ENCODE measurements at regions of chr5 and their contacts with region 1.

Region 1: DNA sequence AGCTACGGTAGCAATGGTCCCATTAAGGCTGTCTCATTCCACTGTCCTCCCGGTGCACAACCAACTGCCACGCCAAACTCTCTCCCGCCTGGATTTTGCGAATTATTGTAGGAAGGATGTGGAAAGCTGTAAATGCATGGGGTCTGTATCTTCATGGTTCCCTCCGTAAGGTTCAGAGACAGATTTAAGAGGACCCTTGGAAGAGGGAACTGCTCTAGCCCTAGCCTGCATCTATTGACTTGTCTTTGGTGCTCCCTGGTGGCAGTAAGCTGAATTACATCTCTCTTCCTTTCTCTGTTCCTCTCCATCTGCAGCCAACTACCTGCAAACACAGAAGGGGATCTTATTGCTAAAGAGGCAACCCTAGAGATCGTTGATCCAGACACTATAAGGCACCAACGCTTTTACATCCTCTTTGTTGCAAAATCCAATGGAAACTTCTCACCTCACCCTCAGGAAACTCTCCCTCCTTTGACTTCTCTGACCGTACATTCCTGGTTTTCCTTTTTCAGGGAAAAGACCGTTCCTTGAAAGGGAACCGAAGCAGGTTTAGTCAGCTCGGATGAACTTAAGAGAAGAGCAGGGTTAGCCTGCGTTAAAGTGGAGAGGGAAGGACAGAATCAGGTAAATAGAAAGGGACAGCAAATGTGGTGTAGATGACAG is 11.9 kb downstream of the CAPSL start:
- DNase-seq: peak; percentile 65
- H3K4me3 Mint-ChIP-seq: peak overlapping the region; percentile 40
- H3K27ac Mint-ChIP-seq: no peak overlapping the region
- H3K4me1 Mint-ChIP-seq: peaks cover 41% of the 10 kb centered on the region
- H3K27me3 Mint-ChIP-seq: peaks cover 12% of the 10 kb centered on the region

Region 2: DNA sequence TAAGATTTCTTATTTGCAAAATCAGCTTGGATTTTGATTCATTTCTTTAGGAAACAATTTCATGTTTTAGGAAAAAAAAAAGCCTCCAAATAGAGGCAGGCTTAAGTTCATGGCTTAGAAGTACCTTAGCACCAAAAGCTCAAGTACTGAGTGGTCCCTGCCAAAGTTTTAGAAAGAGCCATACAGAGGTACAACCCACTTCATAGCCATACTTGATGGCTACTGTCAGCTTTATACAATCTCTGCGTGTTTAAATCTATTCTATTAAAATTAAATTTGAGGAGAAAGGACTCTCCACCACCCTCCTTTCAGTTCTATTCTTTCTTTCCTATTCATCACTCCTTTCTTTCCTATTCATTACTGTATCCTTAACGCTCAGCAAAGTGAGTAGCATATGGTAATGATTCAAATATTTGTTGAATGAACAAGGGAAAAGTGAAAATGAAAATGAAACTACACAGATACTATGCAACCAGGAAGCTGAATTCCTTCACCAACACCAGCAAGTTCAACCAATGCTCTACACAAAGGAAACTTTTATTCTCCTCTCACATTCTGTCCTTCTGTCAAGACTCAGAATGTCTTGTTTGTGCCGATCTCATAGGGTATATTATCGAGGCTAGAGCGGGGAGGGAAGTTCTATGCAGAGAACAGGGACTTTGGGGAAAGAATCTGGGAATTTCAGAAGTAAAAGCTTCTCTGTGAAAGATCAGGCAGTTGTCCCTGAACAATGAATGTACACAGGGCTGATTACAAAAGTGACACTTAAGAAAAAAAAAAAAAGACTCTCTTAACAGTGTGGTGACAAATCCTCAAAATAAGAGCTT is 447.5 kb before region 1 on chr5:
- CTCF ChIA-PET with region 1: no interaction called
- POLR2A ChIA-PET with region 1: interaction called, 3 read pairs
- intact Hi-C with region 1: loop called (anchors 5 kb)
- DNase-seq: no peak
- H3K4me3 Mint-ChIP-seq: peak overlapping the region; percentile 57
- H3K27ac Mint-ChIP-seq: peak overlapping the region; percentile 78
- H3K4me1 Mint-ChIP-seq: peaks cover 9% of the 10 kb centered on the region
- H3K27me3 Mint-ChIP-seq: no peaks in the 10 kb centered on the region

Region 3: DNA sequence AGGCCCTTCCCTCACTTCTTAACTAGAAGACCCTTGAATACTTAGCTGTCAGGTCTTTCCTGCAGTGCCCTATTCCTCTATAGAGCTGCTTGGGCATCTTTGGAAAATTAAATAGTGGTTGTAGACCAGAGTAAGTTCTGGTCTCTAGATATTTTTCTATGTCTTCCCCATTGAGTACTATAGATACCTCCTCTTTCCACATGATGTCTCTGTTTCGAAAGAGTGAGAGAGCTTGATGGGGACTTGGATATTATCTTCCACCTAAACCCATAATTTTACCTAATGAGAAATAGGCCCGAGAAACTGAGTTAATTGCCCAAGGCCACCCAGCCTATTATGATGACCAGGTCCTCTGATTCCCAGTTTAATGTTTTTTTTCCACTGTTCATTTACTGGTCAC is 268.6 kb before region 1 on chr5:
- CTCF ChIA-PET with region 1: interaction called, 216 read pairs
- POLR2A ChIA-PET with region 1: no interaction called
- intact Hi-C with region 1: loop called (anchors 2 kb)
- DNase-seq: no peak
- H3K4me3 Mint-ChIP-seq: no peak overlapping the region
- H3K27ac Mint-ChIP-seq: no peak overlapping the region
- H3K4me1 Mint-ChIP-seq: peaks cover 21% of the 10 kb centered on the region
- H3K27me3 Mint-ChIP-seq: no peaks in the 10 kb centered on the region

Region 4: DNA sequence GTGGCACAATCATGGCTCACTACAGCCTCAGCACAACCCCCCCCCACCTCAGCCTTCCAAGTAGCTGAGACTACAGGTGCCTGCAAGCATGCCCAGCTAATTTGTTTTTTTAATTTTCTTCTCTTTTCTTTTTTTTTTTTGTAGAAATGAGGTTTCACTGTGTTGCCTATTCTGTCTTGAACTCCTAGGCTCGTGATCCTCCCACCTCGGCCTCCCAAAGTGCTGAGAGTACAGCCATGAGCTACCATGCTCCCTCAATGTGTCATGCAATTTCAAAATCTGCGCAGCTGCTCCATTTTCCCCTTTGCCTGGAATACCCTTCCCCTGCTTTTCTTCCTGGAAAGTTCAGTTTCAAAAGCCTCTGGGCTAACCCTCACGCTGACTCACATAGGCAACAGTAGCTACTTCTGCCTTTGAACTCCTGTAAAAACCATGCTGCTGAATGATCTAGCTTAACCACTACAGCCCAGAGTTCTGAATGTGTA is 140.9 kb before region 1 on chr5:
- CTCF ChIA-PET with region 1: interaction called, 132 read pairs
- POLR2A ChIA-PET with region 1: interaction called, 3 read pairs
- intact Hi-C with region 1: no loop called
- DNase-seq: peak; percentile 71
- H3K4me3 Mint-ChIP-seq: peak overlapping the region; percentile 17
- H3K27ac Mint-ChIP-seq: peak overlapping the region; percentile 89
- H3K4me1 Mint-ChIP-seq: peaks cover 85% of the 10 kb centered on the region
- H3K27me3 Mint-ChIP-seq: no peaks in the 10 kb centered on the region

Region 5: DNA sequence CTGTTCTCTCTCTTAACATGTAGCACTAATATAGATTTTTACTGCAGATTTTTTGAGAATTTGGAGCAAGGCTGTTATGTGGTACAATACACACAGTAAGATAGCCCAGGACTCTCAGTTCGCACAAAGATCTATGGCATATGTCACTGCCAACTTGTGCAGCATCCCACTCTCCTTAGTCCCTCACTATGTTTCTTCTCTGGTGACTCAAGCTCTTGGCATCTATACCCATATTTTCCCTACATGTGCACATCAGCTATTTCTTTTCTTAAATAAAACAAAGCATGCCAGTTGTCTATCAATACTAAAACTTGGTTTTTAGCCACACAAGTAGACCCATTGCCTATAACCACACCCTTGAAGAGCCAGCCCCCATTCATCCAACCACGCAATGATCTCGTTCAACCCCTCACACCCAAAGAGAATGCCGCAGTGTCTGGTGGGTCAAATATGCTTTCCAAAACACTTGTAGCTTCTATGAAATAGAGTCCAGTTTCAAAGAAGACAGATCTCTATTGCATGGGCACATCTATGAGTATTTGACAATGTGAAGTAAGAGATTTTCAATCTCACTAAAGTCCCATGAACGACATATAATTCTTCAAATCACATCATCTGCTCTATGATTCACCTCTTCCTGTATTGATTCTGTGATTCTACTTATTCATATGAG is 88.0 kb before region 1 on chr5:
- CTCF ChIA-PET with region 1: interaction called, 7 read pairs
- POLR2A ChIA-PET with region 1: no interaction called
- intact Hi-C with region 1: loop called (anchors 1 kb)
- DNase-seq: peak; percentile 76
- H3K4me3 Mint-ChIP-seq: peak overlapping the region; percentile 50
- H3K27ac Mint-ChIP-seq: peak overlapping the region; percentile 96
- H3K4me1 Mint-ChIP-seq: peaks cover 70% of the 10 kb centered on the region
- H3K27me3 Mint-ChIP-seq: no peaks in the 10 kb centered on the region

Region 6: GRCh38 chr5:35884115-35884788 is 42.3 kb before region 1 on chr5:
- CTCF ChIA-PET with region 1: interaction called, 9 read pairs
- POLR2A ChIA-PET with region 1: no interaction called
- intact Hi-C with region 1: loop called (anchors 1 kb)
- DNase-seq: no peak
- H3K4me3 Mint-ChIP-seq: no peak overlapping the region
- H3K27ac Mint-ChIP-seq: peak overlapping the region; percentile 86
- H3K4me1 Mint-ChIP-seq: peaks cover 40% of the 10 kb centered on the region
- H3K27me3 Mint-ChIP-seq: no peaks in the 10 kb centered on the region

Region 7: DNA sequence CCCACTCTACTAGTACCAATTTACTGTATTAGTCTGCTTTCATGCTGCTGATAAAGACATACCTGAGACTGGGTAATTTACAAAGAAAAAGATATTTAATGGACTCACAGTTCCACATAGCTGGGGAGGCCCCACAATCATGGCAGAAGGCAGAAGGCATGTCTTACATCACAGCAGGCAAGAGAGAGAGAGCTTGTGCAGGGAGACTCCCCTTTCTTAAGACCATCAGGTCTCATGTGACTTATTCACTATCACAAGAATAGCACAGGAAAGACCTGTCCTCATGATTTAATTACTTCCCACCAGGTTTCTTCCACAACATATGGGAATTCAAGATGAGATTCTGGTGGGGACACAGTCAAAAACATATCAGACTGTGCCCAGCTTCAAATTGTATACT is 53.2 kb after region 1 on chr5:
- CTCF ChIA-PET with region 1: no interaction called
- POLR2A ChIA-PET with region 1: no interaction called
- intact Hi-C with region 1: no loop called
- DNase-seq: no peak
- H3K4me3 Mint-ChIP-seq: no peak overlapping the region
- H3K27ac Mint-ChIP-seq: no peak overlapping the region
- H3K4me1 Mint-ChIP-seq: no peaks in the 10 kb centered on the region
- H3K27me3 Mint-ChIP-seq: peaks cover 1% of the 10 kb centered on the region